ENCODE measurements at regions of chr2 and their contacts with region 1.

Region 1: GRCh38 chr2:64819774-64820696 is 166.3 kb upstream of the SERTAD2 start:
- DNase-seq: peak; percentile 78
- ATAC-seq: peak; percentile 97
- H3K4me3 ChIP-seq: peak overlapping the region; percentile 18; the same call in 1 of the 2 replicates
- H3K27ac ChIP-seq: peak overlapping the region; percentile 75
- H3K4me1 ChIP-seq: peaks cover 25% of the 10 kb centered on the region
- H3K27me3 ChIP-seq: no peaks in the 10 kb centered on the region
- CTCF ChIP-seq: no peak
- EP300 ChIP-seq: no peak
- POLR2A ChIP-seq: 0 out of 2 replicates have a peak, but pooled peaks have one; percentile 21
- RAD21 ChIP-seq: peak; percentile 10; the same call in 1 of the 2 replicates

Region 2: GRCh38 chr2:64562148-64562784 is 257.8 kb before region 1 on chr2:
- CTCF ChIA-PET with region 1: no interaction called
- POLR2A ChIA-PET with region 1: no interaction called
- RAD21 ChIA-PET with region 1: no interaction called
- SMC1A ChIA-PET with region 1: no interaction called
- in situ Hi-C with region 1: no loop called
- intact Hi-C with region 1: no loop called
- DNase-seq: no peak
- ATAC-seq: peak; percentile 70
- H3K4me3 ChIP-seq: no peak overlapping the region
- H3K27ac ChIP-seq: no peak overlapping the region
- H3K4me1 ChIP-seq: peaks cover 19% of the 10 kb centered on the region
- H3K27me3 ChIP-seq: no peaks in the 10 kb centered on the region
- CTCF ChIP-seq: peak; percentile 15 to 52 (median 39); a peak in 5 of 6 replicates
- EP300 ChIP-seq: no peak
- POLR2A ChIP-seq: no peak
- RAD21 ChIP-seq: peak; percentile 58

Region 3: DNA sequence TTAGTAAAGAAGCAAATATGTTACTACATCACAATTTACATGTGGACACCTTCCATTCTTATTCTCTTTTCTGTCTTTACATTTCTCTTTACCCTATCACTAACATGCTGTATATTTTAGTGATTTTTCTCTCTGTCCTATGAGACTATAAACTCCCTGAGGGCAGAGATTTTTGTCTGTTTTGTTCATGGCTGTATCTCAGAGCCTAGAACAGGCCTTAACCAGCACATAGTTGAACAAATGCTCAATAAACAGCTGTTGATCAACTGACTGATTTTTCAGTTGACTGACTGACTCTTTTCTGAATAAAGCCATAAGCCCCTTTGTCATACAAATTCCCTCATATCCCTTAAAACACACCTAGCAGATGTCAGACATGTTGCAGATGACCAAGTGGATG is 41.5 kb before region 1 on chr2:
- CTCF ChIA-PET with region 1: no interaction called
- POLR2A ChIA-PET with region 1: no interaction called
- RAD21 ChIA-PET with region 1: no interaction called
- SMC1A ChIA-PET with region 1: no interaction called
- in situ Hi-C with region 1: no loop called
- intact Hi-C with region 1: no loop called
- DNase-seq: no peak
- ATAC-seq: no peak
- H3K4me3 ChIP-seq: no peak overlapping the region
- H3K27ac ChIP-seq: no peak overlapping the region
- H3K4me1 ChIP-seq: no peaks in the 10 kb centered on the region
- H3K27me3 ChIP-seq: no peaks in the 10 kb centered on the region
- CTCF ChIP-seq: no peak
- EP300 ChIP-seq: no peak
- POLR2A ChIP-seq: no peak
- RAD21 ChIP-seq: no peak

Region 4: DNA sequence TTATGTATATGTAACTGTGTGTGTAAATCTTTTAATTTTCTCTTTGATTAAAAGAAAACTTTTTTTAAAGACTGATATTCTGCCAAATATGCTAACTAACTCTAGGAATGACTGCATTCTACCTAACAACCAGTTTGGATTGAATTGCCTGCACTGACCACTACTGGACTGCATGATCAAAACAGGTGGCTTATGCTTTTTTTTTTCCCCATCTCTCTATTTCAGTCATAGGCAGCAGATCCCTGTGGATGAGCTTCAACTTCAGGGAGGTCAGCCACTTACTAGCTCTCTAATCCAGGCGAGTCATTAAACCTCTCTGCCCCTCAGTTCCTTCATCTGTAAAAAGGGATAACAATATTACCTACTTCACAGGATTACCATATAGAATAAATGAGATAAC is 27.7 kb before region 1 on chr2:
- CTCF ChIA-PET with region 1: interaction called, 3 read pairs
- POLR2A ChIA-PET with region 1: interaction called, 4 read pairs
- RAD21 ChIA-PET with region 1: interaction called, 3 read pairs
- SMC1A ChIA-PET with region 1: interaction called, 20 read pairs
- in situ Hi-C with region 1: no loop called
- intact Hi-C with region 1: no loop called
- DNase-seq: no peak
- ATAC-seq: peak; percentile 37; the same call in 2 of the 3 replicates
- H3K4me3 ChIP-seq: no peak overlapping the region
- H3K27ac ChIP-seq: no peak overlapping the region
- H3K4me1 ChIP-seq: no peaks in the 10 kb centered on the region
- H3K27me3 ChIP-seq: no peaks in the 10 kb centered on the region
- CTCF ChIP-seq: peak in 1 of 3 experiments; percentile 20; a peak in 1 of 6 replicates
- EP300 ChIP-seq: no peak
- POLR2A ChIP-seq: no peak
- RAD21 ChIP-seq: no peak